ENCODE measurements at regions of chr1 and their contacts with region 1.

Region 1: GRCh38 chr1:171781176-171781875 is at the start of gene METTL13:
- DNase-seq: peak; percentile 96 to 100 (median 99)

Region 2: DNA sequence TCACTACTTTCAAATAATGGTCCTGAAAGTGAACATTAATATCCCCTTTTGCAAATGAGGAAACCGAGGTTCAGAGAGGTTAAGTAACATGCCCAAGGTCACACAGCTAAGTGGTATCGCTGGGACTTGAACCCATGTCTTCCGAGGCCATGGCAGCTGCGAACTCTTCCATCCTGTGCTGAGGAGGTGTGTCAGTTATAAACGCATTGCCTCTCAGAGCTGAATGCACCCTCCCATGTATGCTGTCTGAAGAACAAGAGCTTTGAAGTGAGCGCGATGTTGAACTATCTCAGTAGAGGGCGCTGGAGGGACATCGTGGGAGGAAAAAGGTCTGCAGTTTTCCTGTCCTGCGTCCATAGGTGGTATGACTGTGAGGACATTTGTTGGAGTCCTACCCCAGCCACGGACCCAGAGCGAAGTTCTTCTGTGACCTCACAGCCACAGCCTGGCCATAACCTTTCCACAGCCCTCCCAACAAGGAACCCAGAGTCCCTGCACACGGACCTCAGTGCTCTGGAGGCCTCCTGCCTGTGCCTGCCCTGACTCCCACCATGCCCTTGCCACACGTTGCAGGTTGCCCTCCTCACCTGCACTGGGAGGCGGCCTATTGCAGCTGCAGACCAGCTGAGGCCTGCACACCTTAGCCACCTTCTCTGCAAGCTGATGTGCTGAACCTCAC is 136.4 kb before region 1 on chr1:
- intact Hi-C with region 1: loop called (anchors 10 kb)
- DNase-seq: peak in 9 of 10 donors; percentile 32 to 94 (median 68)

Region 3: DNA sequence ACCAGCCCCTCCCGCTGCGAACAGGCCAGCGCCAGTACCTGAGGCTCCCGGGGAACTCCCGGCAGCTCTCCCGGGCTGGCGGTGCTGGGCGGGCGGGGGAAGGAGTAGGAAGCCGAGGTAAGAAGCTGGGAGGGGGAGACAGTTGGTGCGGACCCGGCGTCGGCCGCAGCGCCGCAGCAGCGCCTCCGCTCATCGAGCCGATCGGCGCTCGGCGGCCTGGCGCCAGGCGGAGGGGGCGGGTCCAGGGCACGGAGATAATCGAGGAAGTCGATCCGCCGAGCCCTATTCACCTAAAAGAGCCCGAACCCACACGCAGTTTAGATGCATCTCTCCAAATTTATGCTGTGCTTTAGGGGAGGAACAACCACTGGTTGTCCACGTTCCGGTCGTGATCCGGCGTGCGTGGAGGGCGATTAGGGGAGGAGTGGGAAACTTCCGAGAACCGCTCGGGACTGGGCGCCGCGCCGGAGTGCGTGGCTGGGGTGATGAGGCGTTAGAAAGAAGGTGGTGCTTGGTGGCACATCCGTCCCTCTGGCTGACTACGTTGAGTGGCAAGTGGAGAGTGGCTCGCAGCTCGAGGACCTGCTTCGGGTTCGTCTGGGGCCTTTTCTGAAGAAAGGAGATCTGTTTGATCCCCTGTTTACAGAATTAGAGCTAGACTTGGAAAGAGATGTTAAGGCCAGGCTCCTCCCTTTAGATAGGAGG is 39.3 kb before region 1 on chr1 and contains the start of gene VAMP4:
- intact Hi-C with region 1: loop called (anchors 1 kb)
- DNase-seq: peak; percentile 80 to 97 (median 86)

Measured in posterior cingulate gyrus (tissue), 11 donors.